HepG2 (cell line): ENCODE measurements at regions of chr4 and their contacts with region 1.

Region 1: DNA sequence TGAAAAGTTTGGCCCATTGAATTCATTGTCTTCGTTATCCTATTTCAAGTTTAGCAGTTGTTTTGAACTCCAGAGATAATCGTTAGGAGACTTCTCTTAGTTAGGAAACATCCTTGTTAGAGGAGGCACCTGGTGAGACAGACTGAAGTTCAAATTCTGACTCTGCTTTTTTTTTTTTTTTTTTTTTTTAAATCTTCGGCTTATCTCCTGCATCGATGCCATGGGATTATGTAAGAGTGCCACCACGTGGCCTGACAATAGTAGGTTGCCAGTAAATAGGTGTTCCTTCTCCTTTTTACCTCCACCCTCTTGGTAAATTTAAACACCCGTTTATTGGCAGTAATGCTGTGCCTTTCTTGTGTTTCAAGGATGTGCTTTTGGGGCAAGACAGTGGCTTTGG is 149.3 kb downstream of the SOWAHB start:
- DNase-seq: peak; percentile 12
- ATAC-seq: no peak
- H3K4me3 ChIP-seq: no peak overlapping the region
- H3K27ac ChIP-seq: no peak overlapping the region
- H3K4me1 ChIP-seq: no peaks in the 10 kb centered on the region
- H3K27me3 ChIP-seq: no peaks in the 10 kb centered on the region; a peak in 1 of 5 replicates
- CTCF ChIP-seq: peak; percentile 35
- EP300 ChIP-seq: no peak
- POLR2A ChIP-seq: no peak
- RAD21 ChIP-seq: no peak

Region 2: GRCh38 chr4:76504613-76505465 is 243.8 kb before region 1 on chr4:
- CTCF ChIA-PET with region 1: no interaction called
- POLR2A ChIA-PET with region 1: no interaction called
- in situ Hi-C with region 1: loop called (anchors 5 kb)
- intact Hi-C with region 1: no loop called
- DNase-seq: peak; percentile 36
- ATAC-seq: no peak
- H3K4me3 ChIP-seq: no peak overlapping the region
- H3K27ac ChIP-seq: no peak overlapping the region
- H3K4me1 ChIP-seq: no peaks in the 10 kb centered on the region
- H3K27me3 ChIP-seq: no peaks in the 10 kb centered on the region
- CTCF ChIP-seq: peak; percentile 62
- EP300 ChIP-seq: no peak
- POLR2A ChIP-seq: no peak
- RAD21 ChIP-seq: no peak; the same call in 1 of the 2 replicates

Region 3: GRCh38 chr4:76784237-76784636 is 35.6 kb after region 1 on chr4:
- CTCF ChIA-PET with region 1: no interaction called
- POLR2A ChIA-PET with region 1: no interaction called
- in situ Hi-C with region 1: no loop called
- intact Hi-C with region 1: no loop called
- DNase-seq: no peak
- ATAC-seq: peak; percentile 54; the same call in 2 of the 3 replicates
- H3K4me3 ChIP-seq: no peak overlapping the region
- H3K27ac ChIP-seq: no peak overlapping the region
- H3K4me1 ChIP-seq: peaks cover 24% of the 10 kb centered on the region
- H3K27me3 ChIP-seq: no peaks in the 10 kb centered on the region
- CTCF ChIP-seq: peak; percentile 28; the same call in 1 of the 2 replicates
- EP300 ChIP-seq: no peak
- POLR2A ChIP-seq: no peak
- RAD21 ChIP-seq: no peak